Activated CD4-positive, alpha-beta T cell treated with anti-CD3 and anti-CD28 coated beads, Interleukin-2, amount 10 ng/mL, durations not matched to agents 24 days and 14 days (primary cell): ENCODE measurements at regions of chr11 and their contacts with region 1.

Region 1: GRCh38 chr11:95661162-95661561 is 128.4 kb downstream of the FAM76B start:
- DNase-seq: no peak
- H3K4me3 Mint-ChIP-seq: no peak overlapping the region
- H3K27ac Mint-ChIP-seq: peak overlapping the region; percentile 3
- H3K4me1 Mint-ChIP-seq: peaks cover 16% of the 10 kb centered on the region
- H3K27me3 Mint-ChIP-seq: no peaks in the 10 kb centered on the region

Region 2: DNA sequence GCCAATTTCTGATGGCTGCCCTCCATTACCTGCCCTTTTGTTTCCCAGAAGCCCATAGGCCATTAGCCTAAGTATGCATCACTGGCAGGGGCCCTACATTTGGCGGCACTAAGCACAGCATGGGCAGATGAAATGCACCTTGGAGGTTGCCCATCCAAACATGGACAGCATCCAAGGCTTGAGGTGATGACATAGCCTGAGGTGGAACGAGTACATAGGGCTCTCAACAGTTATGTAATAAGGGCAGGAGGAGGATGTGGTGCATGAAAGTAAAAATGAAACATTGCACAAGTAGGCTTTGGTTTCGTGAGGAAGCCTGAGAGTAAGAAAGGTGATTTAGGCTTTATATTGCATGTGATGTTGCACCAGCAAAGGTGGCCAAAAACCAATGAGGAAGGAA is 19.7 kb before region 1 on chr11:
- intact Hi-C with region 1: loop called (anchors 1 kb)
- DNase-seq: peak; percentile 84
- H3K4me3 Mint-ChIP-seq: no peak overlapping the region
- H3K27ac Mint-ChIP-seq: peak overlapping the region; percentile 55
- H3K4me1 Mint-ChIP-seq: peaks cover 17% of the 10 kb centered on the region
- H3K27me3 Mint-ChIP-seq: no peaks in the 10 kb centered on the region

Region 3: DNA sequence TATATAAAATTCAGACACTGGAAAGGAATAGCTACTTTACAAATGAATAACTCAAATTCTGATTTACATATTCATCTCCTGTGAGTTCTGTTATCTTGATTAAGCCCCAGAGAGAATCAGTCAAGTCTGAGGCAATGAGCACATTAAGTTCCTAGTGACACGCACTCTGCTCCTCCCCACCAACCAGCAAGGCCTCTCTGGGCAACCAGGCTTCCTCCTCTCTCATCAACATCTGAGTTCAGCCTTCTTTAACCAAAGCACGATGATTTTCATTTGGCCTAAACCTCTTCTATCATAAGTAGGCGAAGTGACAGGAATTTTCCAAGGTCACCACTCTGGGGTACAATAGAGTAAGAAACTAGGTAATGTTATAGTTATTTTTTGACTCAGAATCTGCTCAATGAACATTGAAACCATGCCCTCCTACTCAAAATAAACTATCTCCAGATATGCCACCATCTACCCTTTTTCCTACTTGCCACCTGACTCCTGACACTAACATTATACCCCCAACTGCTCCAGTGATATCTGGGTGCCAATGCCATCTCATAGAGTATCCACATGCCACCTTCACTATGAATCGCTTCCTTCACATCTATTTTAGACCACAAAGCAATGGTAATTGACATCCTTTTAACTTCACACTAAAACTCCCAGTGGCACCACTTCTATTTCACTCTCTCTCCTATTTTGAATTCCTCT is 13.6 kb after region 1 on chr11:
- intact Hi-C with region 1: loop called (anchors 2 kb)
- DNase-seq: no peak
- H3K4me3 Mint-ChIP-seq: no peak overlapping the region
- H3K27ac Mint-ChIP-seq: peak overlapping the region; percentile 87
- H3K4me1 Mint-ChIP-seq: peaks cover 41% of the 10 kb centered on the region
- H3K27me3 Mint-ChIP-seq: no peaks in the 10 kb centered on the region

Region 4: DNA sequence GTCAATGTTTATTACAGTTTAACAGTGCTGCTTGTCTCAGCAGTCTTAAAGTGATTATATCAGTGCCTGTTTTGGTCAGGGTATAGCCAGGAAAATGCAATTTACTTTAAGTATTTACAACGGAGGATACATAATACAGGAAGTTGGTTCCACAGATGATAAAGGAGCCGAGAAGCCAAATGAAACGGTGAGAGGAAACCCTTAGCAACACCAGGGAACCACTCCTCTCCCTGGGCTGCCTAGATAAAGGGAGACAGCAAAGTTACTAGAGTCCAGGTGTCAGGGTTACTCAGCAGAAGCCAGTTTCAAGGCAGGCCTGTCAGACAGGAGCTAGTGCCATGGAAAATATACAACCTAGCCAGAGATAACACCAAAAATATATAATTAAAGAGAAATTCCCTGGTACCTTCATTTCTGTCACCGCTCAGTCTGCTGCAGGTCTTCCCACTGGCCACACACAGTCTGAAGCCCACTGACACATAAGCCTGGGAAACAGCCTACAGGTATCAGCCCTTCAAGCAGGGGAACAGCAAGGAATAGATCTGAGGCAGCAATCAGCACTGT is 72.9 kb after region 1 on chr11:
- intact Hi-C with region 1: no loop called
- DNase-seq: no peak
- H3K4me3 Mint-ChIP-seq: no peak overlapping the region
- H3K27ac Mint-ChIP-seq: peak overlapping the region; percentile 31
- H3K4me1 Mint-ChIP-seq: peaks cover 11% of the 10 kb centered on the region
- H3K27me3 Mint-ChIP-seq: peaks cover 3% of the 10 kb centered on the region